Right ventricle myocardium inferior (tissue), 1 donor: ENCODE measurements at regions of chr2 and their contacts with region 1.

Region 1: GRCh38 chr2:225889446-225889850 is 489.9 kb downstream of the NYAP2 start:
- DNase-seq: no peak
- ATAC-seq: no peak

Region 2: GRCh38 chr2:225980372-225980771 is 90.9 kb after region 1 on chr2:
- intact Hi-C with region 1: no loop called
- DNase-seq: no peak
- ATAC-seq: no peak

Region 3: GRCh38 chr2:226984750-226985582 is 1095.5 kb after region 1 on chr2:
- intact Hi-C with region 1: loop called (anchors 5 kb)
- DNase-seq: no peak
- ATAC-seq: peak; percentile 69